Posterior vena cava (tissue), 2 donors: ENCODE measurements at regions of chr3 and their contacts with region 1.

Region 1: GRCh38 chr3:86785386-86785785 is 205.6 kb downstream of the VGLL3 start:
- DNase-seq: no peak

Region 2: DNA sequence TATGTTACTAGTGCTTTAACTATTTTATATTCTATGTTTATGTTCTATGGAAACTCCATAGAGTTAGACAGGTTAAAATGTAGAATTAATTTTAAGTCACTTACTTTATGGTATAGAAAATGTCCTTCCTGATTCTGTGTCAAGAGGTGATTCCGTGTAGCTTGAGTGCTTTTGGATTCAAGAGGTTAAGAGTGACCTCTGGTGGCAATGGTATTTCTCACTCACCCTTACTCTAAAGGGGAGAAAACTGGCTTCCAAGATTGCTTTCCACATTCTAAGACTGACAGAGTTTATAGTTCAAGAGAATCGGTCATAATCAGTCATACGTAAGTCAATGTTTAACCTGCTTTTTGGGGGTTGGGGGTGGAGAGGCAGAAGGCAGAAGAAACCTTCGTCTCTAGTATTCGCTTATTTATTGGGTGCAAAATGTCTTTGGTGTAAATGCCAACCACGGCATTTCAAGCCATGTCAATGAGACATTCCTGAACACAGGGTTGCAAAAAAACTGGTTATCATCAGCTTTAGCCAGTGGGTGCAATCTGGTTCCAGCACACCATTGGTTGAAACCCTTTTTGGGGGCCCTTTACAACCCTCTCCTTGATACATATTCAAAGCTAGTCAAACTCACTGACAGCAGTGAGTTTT is 297.5 kb after region 1 on chr3:
- intact Hi-C with region 1: loop called in 1 of 2 experiments (anchors 5 kb)
- DNase-seq: no peak